Adrenal gland (tissue), 19 donors: ENCODE measurements at regions of chr9 and their contacts with region 1.

Region 1: GRCh38 chr9:120619751-120620655 is 40.0 kb upstream of the CDK5RAP2 start:
- DNase-seq: peak; percentile 33 to 87 (median 61)
- H3K4me3 ChIP-seq: no peak overlapping the region
- H3K27ac ChIP-seq: no peak overlapping the region
- H3K4me1 ChIP-seq: peaks cover 0 to 5% of the 10 kb centered on the region in 2 donors
- H3K27me3 ChIP-seq: no peaks in the 10 kb centered on the region
- CTCF ChIP-seq: peak; percentile 78 to 93 (median 88)
- POLR2A ChIP-seq: no peak

Region 2: DNA sequence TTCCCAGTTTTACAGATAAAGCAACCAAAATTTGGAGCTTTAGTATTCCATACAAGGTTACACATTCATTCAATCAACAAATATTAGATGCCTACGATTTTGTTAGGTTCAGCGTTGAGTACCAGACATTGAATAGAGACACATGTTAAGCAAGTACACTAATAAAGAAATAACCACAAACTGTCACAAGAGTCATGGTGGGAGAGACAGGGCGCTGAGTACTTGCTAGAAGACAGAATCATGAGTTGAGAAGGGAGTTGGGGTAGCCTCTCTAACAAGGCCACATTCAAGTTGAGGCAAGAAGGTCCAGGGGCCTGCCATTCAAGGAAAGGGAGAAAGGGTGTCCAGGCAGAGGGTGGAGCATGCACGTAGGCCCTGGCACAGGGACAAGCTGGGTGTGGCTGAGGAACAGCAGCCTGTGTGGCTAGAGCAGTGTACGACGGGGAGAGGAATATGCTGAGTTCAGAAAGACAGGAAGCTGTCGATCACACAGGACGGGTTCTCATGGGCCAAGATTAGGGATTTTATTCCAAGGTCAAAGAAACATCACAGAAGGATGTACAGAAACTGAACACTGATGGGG is 57.1 kb before region 1 on chr9:
- intact Hi-C with region 1: no loop called
- DNase-seq: no peak
- H3K4me3 ChIP-seq: no peak overlapping the region
- H3K27ac ChIP-seq: no peak overlapping the region
- H3K4me1 ChIP-seq: no peaks in the 10 kb centered on the region
- H3K27me3 ChIP-seq: no peaks in the 10 kb centered on the region
- CTCF ChIP-seq: no peak
- POLR2A ChIP-seq: no peak

Region 3: GRCh38 chr9:120729791-120730241 is 109.8 kb after region 1 on chr9:
- intact Hi-C with region 1: loop called (anchors 5 to 10 kb)
- DNase-seq: peak in 1 of 7 donors; percentile 47
- H3K4me3 ChIP-seq: no peak overlapping the region
- H3K27ac ChIP-seq: no peak overlapping the region
- H3K4me1 ChIP-seq: no peaks in the 10 kb centered on the region
- H3K27me3 ChIP-seq: no peaks in the 10 kb centered on the region
- CTCF ChIP-seq: no peak
- POLR2A ChIP-seq: no peak

Region 4: GRCh38 chr9:120735415-120736126 is 115.6 kb after region 1 on chr9:
- intact Hi-C with region 1: loop called in 1 of 2 experiments (anchors 5 kb)
- DNase-seq: peak in 2 of 7 donors; percentile 23 to 41
- H3K4me3 ChIP-seq: no peak overlapping the region
- H3K27ac ChIP-seq: peak overlapping the region in 2 of 5 donors; percentile 21 to 78
- H3K4me1 ChIP-seq: no peaks in the 10 kb centered on the region
- H3K27me3 ChIP-seq: no peaks in the 10 kb centered on the region
- CTCF ChIP-seq: no peak
- POLR2A ChIP-seq: no peak